ENCODE measurements at regions of chr2 and their contacts with region 1.

Region 1: GRCh38 chr2:25201265-25201664 is 32.9 kb upstream of the POMC start:
- DNase-seq: no peak
- H3K4me3 ChIP-seq: no peak overlapping the region
- H3K27ac ChIP-seq: no peak overlapping the region
- H3K4me1 ChIP-seq: no peaks in the 10 kb centered on the region
- H3K27me3 ChIP-seq: no peaks in the 10 kb centered on the region
- CTCF ChIP-seq: peak; percentile 46

Region 2: DNA sequence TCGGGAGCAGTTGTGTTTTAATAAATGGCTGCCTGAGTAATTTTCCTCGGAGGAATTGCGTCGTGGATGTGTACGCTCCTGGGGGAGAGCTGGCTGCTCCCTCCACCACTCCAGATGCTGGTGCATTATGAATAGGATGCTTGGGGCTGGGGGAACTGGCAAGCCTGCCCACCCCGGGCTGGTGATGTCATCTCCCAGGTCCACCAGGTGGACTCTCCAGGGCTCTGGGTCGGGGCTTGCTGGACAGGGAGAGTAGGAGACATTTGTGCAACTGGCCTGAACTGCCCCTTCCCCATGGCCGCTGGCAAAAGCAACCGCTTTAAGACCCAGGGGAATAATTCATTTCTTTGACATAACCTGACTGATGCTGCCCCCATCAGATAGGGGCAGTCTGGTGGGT is 1657.5 kb before region 1 on chr2:
- CTCF ChIA-PET with region 1: interaction called, 15 read pairs
- POLR2A ChIA-PET with region 1: no interaction called
- intact Hi-C with region 1: no loop called
- DNase-seq: no peak
- H3K4me3 ChIP-seq: no peak overlapping the region
- H3K27ac ChIP-seq: no peak overlapping the region
- H3K4me1 ChIP-seq: no peaks in the 10 kb centered on the region
- H3K27me3 ChIP-seq: no peaks in the 10 kb centered on the region
- CTCF ChIP-seq: no peak

Region 3: GRCh38 chr2:24409700-24410556 is 791.3 kb before region 1 on chr2:
- CTCF ChIA-PET with region 1: no interaction called
- POLR2A ChIA-PET with region 1: no interaction called
- intact Hi-C with region 1: loop called (anchors 1 kb)
- DNase-seq: peak; percentile 38 to 58
- H3K4me3 ChIP-seq: no peak overlapping the region
- H3K27ac ChIP-seq: no peak overlapping the region
- H3K4me1 ChIP-seq: peaks cover 11% of the 10 kb centered on the region
- H3K27me3 ChIP-seq: no peaks in the 10 kb centered on the region
- CTCF ChIP-seq: peak; percentile 92

Region 4: GRCh38 chr2:25131567-25132298 is 69.5 kb before region 1 on chr2:
- CTCF ChIA-PET with region 1: no interaction called
- POLR2A ChIA-PET with region 1: no interaction called
- intact Hi-C with region 1: loop called (anchors 5 kb)
- DNase-seq: no peak
- H3K4me3 ChIP-seq: no peak overlapping the region
- H3K27ac ChIP-seq: no peak overlapping the region
- H3K4me1 ChIP-seq: no peaks in the 10 kb centered on the region
- H3K27me3 ChIP-seq: peaks cover 61% of the 10 kb centered on the region
- CTCF ChIP-seq: no peak

Region 5: DNA sequence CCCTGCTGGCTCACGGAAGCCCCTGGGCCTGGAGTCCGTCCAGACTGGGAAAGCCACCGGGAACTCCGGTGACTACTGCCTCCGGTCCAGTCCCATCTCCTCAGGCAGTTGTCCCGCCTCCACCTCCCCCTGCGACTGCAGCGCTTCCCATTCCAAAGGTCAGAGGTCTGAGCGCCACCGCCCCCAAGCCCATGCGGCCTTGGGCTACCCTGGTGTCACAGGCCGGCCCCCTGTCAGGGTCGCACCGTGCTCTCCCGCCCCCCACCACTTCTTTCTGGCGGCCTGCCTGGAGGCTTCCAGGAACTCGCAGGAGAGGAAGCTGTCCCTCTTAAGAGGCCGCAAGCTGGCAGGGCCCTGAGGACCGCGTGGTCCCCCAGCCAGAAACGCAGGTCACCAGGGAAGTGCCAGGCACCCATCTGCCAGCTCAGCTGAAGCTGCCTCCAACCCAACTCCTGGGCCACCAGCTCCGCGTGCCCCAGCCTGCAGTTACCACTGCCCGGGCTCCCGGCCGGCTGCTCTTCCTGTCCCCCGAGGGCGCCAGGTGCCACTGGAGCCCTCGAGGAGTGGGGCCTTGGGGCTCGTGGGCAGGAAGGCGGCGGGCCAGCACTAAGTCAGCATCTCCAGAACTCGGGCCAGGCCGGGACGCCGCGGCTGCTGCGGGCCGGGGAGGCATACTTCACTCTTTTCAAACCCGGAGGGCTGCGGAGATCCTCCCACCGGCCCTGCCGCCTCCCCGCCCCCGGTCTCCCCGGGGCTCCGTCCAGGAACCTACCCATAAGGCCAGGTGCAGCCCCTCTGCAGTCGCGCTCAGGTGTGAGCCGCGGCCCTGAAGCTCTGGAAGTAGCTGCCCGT is 50.4 kb after region 1 on chr2:
- CTCF ChIA-PET with region 1: no interaction called
- POLR2A ChIA-PET with region 1: no interaction called
- intact Hi-C with region 1: no loop called
- DNase-seq: peak in 1 of 2 experiments; percentile 50
- H3K4me3 ChIP-seq: peak overlapping the region; percentile 97
- H3K27ac ChIP-seq: 0 out of 2 replicates have a peak overlapping the region, but pooled peaks have one; percentile 32
- H3K4me1 ChIP-seq: 0 out of 2 replicates have a peak, but pooled peaks cover 9% of the 10 kb centered on the region
- H3K27me3 ChIP-seq: no peaks in the 10 kb centered on the region
- CTCF ChIP-seq: no peak

Measured in PC-9 (cell line).